HepG2 (cell line): ENCODE measurements at regions of chr1 and their contacts with region 1.

Region 1: GRCh38 chr1:173867753-173868265 is at the start of gene GAS5:
- DNase-seq: peak; percentile 99
- ATAC-seq: peak; percentile 87
- H3K4me3 ChIP-seq: peak within 1 kb of the TSS; percentile 58 to 98 (median 94)
- H3K27ac ChIP-seq: peak within 1 kb of the TSS; percentile 91
- H3K4me1 ChIP-seq: peaks cover 45% of the 10 kb centered on the region
- H3K27me3 ChIP-seq: no peaks in the 10 kb centered on the region; a peak in 1 of 5 replicates
- CTCF ChIP-seq: no peak
- EP300 ChIP-seq: 0 out of 4 replicates have a peak, but pooled peaks of 1 of the 2 experiments have one; percentile 10
- POLR2A ChIP-seq: peak; percentile 99 to 100
- RAD21 ChIP-seq: no peak; the same call in 1 of the 2 replicates
- total RNA-seq, gene GAS5: 184 and 352 TPM in 2 replicates

Region 2: DNA sequence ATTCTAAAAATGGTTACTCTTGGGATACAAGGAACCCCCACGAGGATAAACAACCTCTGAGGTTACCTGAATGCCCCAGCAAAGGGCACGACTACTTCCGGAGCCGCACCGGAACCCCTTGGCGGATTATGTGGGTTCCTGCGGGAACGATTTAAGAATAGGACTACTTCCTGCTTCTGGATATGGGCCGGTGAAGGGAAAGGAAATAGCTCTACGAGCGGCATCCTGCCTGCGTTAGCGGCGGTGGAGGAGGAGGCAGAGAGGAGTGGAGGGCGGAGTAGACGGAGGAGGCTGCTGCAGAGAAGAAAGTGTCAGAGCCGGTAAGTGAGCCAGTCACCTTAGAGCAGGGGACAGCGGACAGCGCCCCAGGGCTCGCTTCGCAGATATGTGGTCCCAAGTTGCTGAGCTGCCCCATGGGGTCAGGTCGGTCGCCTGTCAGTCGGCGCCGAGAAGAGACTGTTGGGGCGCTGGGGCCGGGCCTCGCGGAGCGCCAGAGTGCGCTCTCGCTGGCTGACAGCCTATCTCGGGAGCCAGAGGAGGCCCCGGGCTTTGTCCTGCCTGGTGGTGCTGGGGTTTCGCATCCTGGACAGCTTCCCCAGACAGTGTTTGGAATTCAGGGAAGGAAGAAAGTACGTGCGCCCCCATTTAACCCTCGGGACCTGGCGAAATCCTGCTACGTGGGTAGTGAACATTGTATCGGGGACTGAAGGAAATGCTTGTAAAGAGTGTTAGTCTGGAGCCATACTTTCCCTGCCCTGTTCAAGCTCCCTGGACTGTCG is 152.9 kb before region 1 on chr1 and contains the start of gene KLHL20:
- CTCF ChIA-PET with region 1: no interaction called
- POLR2A ChIA-PET with region 1: interaction called, 12 read pairs
- in situ Hi-C with region 1: no loop called
- intact Hi-C with region 1: no loop called
- DNase-seq: peak; percentile 89
- ATAC-seq: peak; percentile 98
- H3K4me3 ChIP-seq: peak within 1 kb of the TSS; percentile 74 to 97 (median 84)
- H3K27ac ChIP-seq: peak within 1 kb of the TSS; percentile 74
- H3K4me1 ChIP-seq: peaks cover 31% of the 10 kb centered on the region
- H3K27me3 ChIP-seq: peaks cover 0 to 4% of the 10 kb centered on the region in 2 experiments; a peak in 2 of 5 replicates
- CTCF ChIP-seq: peak; percentile 41
- EP300 ChIP-seq: peak in 1 of 2 experiments; percentile 59; a peak in 2 of 4 replicates
- POLR2A ChIP-seq: peak; percentile 74 to 81
- RAD21 ChIP-seq: no peak; the same call in 1 of the 2 replicates
- total RNA-seq, gene KLHL20: 14.3 and 18.8 TPM in 2 replicates

Region 3: GRCh38 chr1:173917635-173918493 is 50.1 kb after region 1 on chr1:
- CTCF ChIA-PET with region 1: no interaction called
- POLR2A ChIA-PET with region 1: interaction called, 47 read pairs
- in situ Hi-C with region 1: no loop called
- intact Hi-C with region 1: no loop called
- DNase-seq: no peak
- ATAC-seq: peak; percentile 52
- H3K4me3 ChIP-seq: peak overlapping the region; percentile 59 to 72 (median 65)
- H3K27ac ChIP-seq: peak overlapping the region; percentile 91
- H3K4me1 ChIP-seq: peaks cover 36% of the 10 kb centered on the region
- H3K27me3 ChIP-seq: no peaks in the 10 kb centered on the region
- CTCF ChIP-seq: no peak
- EP300 ChIP-seq: no peak
- POLR2A ChIP-seq: no peak
- RAD21 ChIP-seq: no peak

Region 4: GRCh38 chr1:174022080-174022975 is 154.5 kb after region 1 on chr1 and contains the start of gene RC3H1:
- CTCF ChIA-PET with region 1: no interaction called
- POLR2A ChIA-PET with region 1: interaction called, 5 read pairs
- in situ Hi-C with region 1: no loop called
- intact Hi-C with region 1: loop called (anchors 2 kb)
- DNase-seq: peak; percentile 80
- ATAC-seq: peak; percentile 91
- H3K4me3 ChIP-seq: peak within 1 kb of the TSS; percentile 75 to 97 (median 93)
- H3K27ac ChIP-seq: peak within 1 kb of the TSS; percentile 84
- H3K4me1 ChIP-seq: peaks cover 43% of the 10 kb centered on the region
- H3K27me3 ChIP-seq: no peaks in the 10 kb centered on the region; a peak in 1 of 5 replicates
- CTCF ChIP-seq: no peak
- EP300 ChIP-seq: 0 out of 4 replicates have a peak, but pooled peaks of 1 of the 2 experiments have one; percentile 32
- POLR2A ChIP-seq: peak; percentile 85 to 97
- RAD21 ChIP-seq: no peak
- total RNA-seq, gene RC3H1: 19.6 and 24.4 TPM in 2 replicates